ENCODE measurements at regions of chr10 and their contacts with region 1.

Region 1: DNA sequence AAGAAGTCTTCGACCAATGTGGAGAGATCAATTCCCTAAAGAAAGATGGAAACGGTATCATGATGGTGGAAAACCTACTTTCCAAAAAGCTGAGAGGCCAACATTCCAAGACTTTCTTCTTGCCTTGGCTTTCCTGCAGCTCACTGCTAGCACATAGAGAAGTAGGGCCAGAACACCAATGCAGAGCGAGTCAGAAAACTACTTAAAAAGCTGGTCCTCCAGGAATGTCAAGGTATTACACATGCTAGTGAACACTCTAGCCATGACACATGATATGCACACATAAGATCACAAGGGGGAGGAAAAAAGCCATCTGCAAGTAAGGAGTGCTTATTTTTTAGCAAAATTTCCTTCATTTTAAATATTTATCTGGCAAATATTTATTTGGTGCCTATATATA is 22.7 kb downstream of the GPAM start:
- DNase-seq: no peak
- ATAC-seq: no peak

Region 2: DNA sequence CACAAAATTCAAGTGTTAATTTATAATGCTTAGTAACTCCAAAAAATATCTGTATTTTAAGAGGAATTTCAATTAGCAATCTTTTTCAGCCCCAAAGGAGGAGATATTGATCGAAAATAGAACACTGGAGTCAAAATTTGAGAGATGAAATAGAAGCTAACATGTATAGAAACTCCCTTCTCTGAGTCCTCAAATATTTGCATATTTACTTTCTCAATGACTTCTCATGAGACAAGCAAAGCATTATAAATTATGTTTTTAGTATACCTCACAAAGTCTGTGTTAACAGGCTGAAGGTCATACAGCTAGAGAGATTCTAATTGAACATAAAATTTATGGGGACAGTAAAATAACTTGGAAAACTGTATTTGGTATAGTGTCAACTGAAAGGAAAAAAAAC is 237.8 kb before region 1 on chr10:
- intact Hi-C with region 1: no loop called
- DNase-seq: no peak
- ATAC-seq: no peak

Region 3: GRCh38 chr10:112434988-112435619 is 274.3 kb after region 1 on chr10:
- intact Hi-C with region 1: loop called (anchors 10 kb)
- DNase-seq: no peak
- ATAC-seq: no peak